ENCODE measurements at regions of chr12 and their contacts with region 1.

Region 1: DNA sequence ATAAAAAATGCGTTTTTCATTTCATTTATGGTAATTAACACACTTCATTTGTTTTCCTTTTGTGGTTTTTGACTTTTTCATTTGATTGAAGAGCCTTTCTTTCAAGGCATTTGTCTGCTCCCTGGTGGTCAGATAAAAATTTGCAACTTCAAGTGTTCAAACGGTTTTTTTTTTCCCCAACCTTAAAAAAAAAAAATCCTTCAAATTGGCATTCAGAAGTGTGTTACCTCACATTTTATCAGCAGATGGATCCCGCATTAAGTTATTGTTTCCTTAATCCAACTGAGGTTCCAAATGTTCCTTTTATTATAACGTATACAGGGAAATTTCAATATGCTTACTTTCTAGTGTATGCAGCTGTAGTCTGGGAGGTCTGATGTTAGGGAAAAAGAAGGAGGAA is 47.2 kb downstream of the MYF5 start:
- ATAC-seq: no peak
- H3K4me3 ChIP-seq: no peak overlapping the region
- H3K27ac ChIP-seq: no peak overlapping the region
- H3K4me1 ChIP-seq: peaks cover 0 to 22% of the 10 kb centered on the region in 2 donors

Region 2: GRCh38 chr12:80178846-80179245 is 585.0 kb before region 1 on chr12:
- in situ Hi-C with region 1: no loop called
- ATAC-seq: no peak
- H3K4me3 ChIP-seq: no peak overlapping the region
- H3K27ac ChIP-seq: no peak overlapping the region
- H3K4me1 ChIP-seq: no peaks in the 10 kb centered on the region

Region 3: GRCh38 chr12:80472902-80473500 is 290.9 kb before region 1 on chr12:
- in situ Hi-C with region 1: loop called in 1 of 9 experiments (anchors 10 kb)
- ATAC-seq: peak in 5 of 8 experiments; percentile 37 to 73 (median 65)
- H3K4me3 ChIP-seq: no peak overlapping the region
- H3K27ac ChIP-seq: no peak overlapping the region
- H3K4me1 ChIP-seq: peaks cover 0 to 2% of the 10 kb centered on the region in 2 donors

Region 4: DNA sequence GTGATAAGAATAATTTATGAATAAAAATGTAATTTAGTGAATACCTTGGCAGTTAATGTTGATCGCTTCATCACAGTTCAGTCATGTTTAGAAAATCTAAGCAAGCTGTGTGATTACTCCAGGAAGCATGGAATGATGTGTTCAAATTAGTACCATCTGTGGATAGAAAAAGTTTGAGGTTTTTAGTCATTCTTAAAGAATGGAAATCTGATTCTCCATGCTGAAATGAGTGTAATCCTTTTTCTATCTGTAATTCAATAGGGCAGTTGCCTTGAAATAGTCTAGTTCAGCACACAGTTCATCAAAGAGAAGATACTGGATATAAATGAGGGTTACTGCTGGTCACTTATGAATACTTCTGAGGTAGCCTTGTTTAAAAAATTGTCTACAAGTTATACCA is 183.6 kb before region 1 on chr12:
- in situ Hi-C with region 1: no loop called
- ATAC-seq: peak in 2 of 8 experiments; percentile 37 to 99
- H3K4me3 ChIP-seq: no peak overlapping the region
- H3K27ac ChIP-seq: no peak overlapping the region
- H3K4me1 ChIP-seq: no peaks in the 10 kb centered on the region

Region 5: GRCh38 chr12:80902711-80903110 is 138.8 kb after region 1 on chr12:
- in situ Hi-C with region 1: no loop called
- ATAC-seq: no peak
- H3K4me3 ChIP-seq: no peak overlapping the region
- H3K27ac ChIP-seq: no peak overlapping the region
- H3K4me1 ChIP-seq: no peaks in the 10 kb centered on the region

Measured in motor neuron (in vitro differentiated cells).